AG04450 (cell line): ENCODE measurements at regions of chr2 and their contacts with region 1.

Region 1: DNA sequence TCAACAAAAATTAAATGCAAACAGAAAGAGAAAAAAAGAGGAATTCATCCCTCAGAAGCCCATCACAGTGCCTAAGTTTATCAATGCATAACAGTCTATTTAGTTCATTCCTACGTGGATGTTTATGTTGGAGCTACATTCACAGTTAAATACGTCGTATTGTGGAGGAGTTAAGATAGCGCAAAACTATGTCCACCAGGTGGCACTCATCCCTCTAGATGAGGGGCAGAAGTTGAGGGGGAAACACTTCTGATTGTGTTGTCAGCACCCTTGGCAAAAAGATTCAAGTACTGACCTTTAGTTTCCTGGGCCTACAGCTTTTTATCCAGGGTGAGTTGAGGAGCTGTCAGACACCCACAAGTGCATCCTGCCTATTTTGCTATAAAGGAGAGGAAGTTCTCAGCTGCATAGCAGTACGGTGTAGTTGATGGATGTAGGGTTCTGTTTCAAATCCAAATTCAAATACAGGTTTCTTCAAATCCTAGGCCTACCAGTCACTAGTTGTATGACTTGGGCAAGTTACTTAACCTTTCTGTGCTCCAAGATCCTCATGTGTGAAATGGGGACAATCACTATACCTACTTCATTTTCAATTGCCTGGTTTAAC is 26.8 kb upstream of the MYO1B start:
- DNase-seq: peak; percentile 80
- H3K4me3 ChIP-seq: no peak overlapping the region
- H3K27ac ChIP-seq: no peak overlapping the region
- H3K27me3 ChIP-seq: no peaks in the 10 kb centered on the region
- CTCF ChIP-seq: peak; percentile 79

Region 2: DNA sequence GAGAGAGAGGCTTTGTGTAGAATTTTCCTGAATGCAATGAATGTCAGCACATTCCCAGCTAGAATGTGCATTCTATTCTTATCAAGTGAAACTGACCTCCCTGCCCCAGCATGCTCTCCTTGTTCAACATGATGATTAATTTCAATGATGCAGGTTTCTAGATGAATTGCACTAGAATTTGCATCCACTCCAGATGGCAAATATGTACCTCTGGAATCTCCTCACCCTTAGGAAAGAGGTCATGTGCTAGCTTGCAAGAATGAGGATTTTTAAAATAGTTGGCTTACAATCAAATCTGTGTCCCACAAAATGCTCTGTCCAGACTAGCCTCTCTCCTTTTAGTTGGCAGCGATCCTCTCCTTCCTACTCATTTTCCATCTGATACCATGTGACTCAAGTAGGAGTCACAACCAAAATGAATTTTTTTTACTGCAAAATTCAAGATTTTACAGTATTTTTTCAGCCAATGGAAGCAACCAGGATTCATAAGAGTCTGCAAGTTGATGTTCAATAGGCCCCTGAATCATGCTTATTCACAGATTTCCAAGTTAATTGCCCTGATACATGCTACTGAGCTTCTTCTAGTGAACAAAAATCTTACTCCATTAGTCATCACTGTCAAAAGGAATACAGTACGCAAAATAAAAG is 46.6 kb before region 1 on chr2:
- CTCF ChIA-PET with region 1: interaction called, 24 read pairs
- POLR2A ChIA-PET with region 1: no interaction called
- DNase-seq: peak; percentile 81
- H3K4me3 ChIP-seq: no peak overlapping the region
- H3K27ac ChIP-seq: peak overlapping the region; percentile 81
- H3K27me3 ChIP-seq: no peaks in the 10 kb centered on the region
- CTCF ChIP-seq: no peak

Region 3: GRCh38 chr2:191231995-191232394 is 13.6 kb after region 1 on chr2:
- CTCF ChIA-PET with region 1: interaction called, 22 read pairs
- POLR2A ChIA-PET with region 1: no interaction called
- DNase-seq: no peak
- H3K4me3 ChIP-seq: no peak overlapping the region
- H3K27ac ChIP-seq: no peak overlapping the region
- H3K27me3 ChIP-seq: no peaks in the 10 kb centered on the region
- CTCF ChIP-seq: peak; percentile 64

Region 4: DNA sequence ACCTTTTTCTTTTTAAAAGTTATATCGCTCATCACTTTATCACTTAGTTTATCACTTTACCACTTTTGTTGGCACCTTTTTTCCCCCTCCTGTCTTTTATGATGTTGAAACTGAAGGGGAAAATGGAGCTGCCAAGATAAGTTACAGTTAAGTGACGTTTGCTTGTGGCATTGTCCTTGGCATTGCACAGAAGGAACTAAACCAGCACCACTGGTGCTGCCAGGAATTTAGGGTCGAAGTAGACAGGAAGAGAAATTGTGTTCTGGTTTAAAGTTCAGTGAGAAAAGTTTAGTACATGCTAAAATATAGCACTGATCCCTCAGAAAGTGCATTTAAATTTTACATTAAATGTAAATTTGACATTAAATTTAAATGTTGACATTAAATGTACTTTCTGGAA is 76.7 kb after region 1 on chr2:
- CTCF ChIA-PET with region 1: no interaction called
- POLR2A ChIA-PET with region 1: no interaction called
- DNase-seq: no peak
- H3K4me3 ChIP-seq: no peak overlapping the region
- H3K27ac ChIP-seq: no peak overlapping the region
- H3K27me3 ChIP-seq: no peaks in the 10 kb centered on the region
- CTCF ChIP-seq: no peak

Region 5: DNA sequence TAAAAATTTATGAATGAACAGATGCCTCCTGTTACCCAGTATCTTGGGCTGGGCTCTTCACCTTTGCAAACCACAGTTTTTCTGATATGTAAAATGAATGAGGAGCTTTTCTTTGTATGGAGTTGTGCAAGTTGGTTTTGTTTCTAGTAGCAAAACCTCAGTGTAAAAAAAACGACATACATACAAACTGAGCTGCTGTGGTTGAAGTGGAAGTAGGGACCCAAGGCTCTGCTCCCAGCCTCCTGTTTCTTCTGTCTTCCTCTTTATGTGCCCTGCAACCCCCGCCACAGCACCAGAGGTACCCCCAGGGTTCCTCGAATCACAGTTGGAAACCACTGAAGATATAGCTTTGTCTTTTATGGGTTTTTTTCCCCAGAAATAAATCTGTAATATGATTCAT is 144.9 kb after region 1 on chr2:
- CTCF ChIA-PET with region 1: interaction called, 18 read pairs
- POLR2A ChIA-PET with region 1: no interaction called
- DNase-seq: no peak
- H3K4me3 ChIP-seq: no peak overlapping the region
- H3K27ac ChIP-seq: peak overlapping the region; percentile 85
- H3K27me3 ChIP-seq: no peaks in the 10 kb centered on the region
- CTCF ChIP-seq: no peak

Region 6: GRCh38 chr2:191521608-191522208 is 303.3 kb after region 1 on chr2:
- CTCF ChIA-PET with region 1: interaction called, 42 read pairs
- POLR2A ChIA-PET with region 1: no interaction called
- DNase-seq: no peak
- H3K4me3 ChIP-seq: no peak overlapping the region
- H3K27ac ChIP-seq: no peak overlapping the region
- H3K27me3 ChIP-seq: no peaks in the 10 kb centered on the region
- CTCF ChIP-seq: peak; percentile 79